CD4-positive, alpha-beta memory T cell (primary cell): ENCODE measurements at regions of chr5 and their contacts with region 1.

Region 1: GRCh38 chr5:157049605-157050004 is 9.3 kb downstream of the HAVCR1 start:
- DNase-seq: no peak
- H3K4me3 ChIP-seq: peak overlapping the region; percentile 18 to 22
- H3K4me3 Mint-ChIP-seq: peak overlapping the region; percentile 65 to 87 (median 82)
- H3K27ac ChIP-seq: no peak overlapping the region
- H3K27ac Mint-ChIP-seq: peak overlapping the region; percentile 68 to 95 (median 91)
- H3K4me1 ChIP-seq: peaks cover 17% of the 10 kb centered on the region
- H3K4me1 Mint-ChIP-seq: peaks cover 20 to 50% (median 33%) of the 10 kb centered on the region in 4 donors
- H3K27me3 ChIP-seq: no peaks in the 10 kb centered on the region
- H3K27me3 Mint-ChIP-seq: no peaks in the 10 kb centered on the region

Region 2: GRCh38 chr5:157108976-157109375 is 59.4 kb after region 1 on chr5 and contains the start of gene HAVCR2:
- CTCF ChIA-PET with region 1: no interaction called
- POLR2A ChIA-PET with region 1: no interaction called
- intact Hi-C with region 1: loop called (anchors 5 kb)
- DNase-seq: peak; percentile 47 to 63 (median 54)
- H3K4me3 ChIP-seq: peak within 1 kb of the TSS; percentile 7 to 25
- H3K4me3 Mint-ChIP-seq: peak within 1 kb of the TSS; percentile 72 to 90 (median 86)
- H3K27ac ChIP-seq: peak within 1 kb of the TSS; percentile 12
- H3K27ac Mint-ChIP-seq: peak within 1 kb of the TSS; percentile 75 to 96 (median 92)
- H3K4me1 ChIP-seq: peaks cover 27% of the 10 kb centered on the region
- H3K4me1 Mint-ChIP-seq: peaks cover 20 to 49% (median 31%) of the 10 kb centered on the region in 4 donors
- H3K27me3 ChIP-seq: no peaks in the 10 kb centered on the region
- H3K27me3 Mint-ChIP-seq: no peaks in the 10 kb centered on the region
- total RNA-seq, gene HAVCR2: 2.7 to 4.5 TPM

Region 3: DNA sequence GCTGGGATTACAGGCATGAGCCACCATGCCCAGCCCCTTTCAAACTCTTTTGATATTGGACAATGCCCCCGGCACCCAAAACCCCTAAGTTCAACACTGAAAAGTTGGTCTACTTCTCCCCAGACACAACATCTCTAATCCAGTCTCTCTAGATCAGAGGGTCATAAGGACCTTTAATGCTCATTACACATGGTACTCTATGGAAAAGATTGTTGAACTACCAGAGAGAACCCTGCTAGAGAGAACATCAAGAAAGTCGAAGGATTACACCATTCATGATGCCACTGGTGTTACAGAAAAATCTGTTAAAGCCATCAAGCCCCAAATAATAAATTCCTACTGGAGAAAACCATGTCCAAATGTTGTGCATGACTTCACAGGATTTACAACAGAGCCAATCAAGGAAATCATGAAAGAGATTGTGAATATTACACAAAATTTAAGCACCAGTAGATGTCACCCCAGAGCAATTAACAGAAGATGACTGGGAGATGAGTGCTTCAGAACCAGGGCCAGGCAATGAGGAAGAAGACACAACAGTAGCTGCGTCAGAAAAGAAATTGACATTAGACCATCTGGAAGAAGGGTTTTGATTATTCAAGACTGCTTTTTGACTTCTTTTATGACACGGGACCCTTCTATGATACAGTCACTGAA is 382.1 kb after region 1 on chr5:
- CTCF ChIA-PET with region 1: no interaction called
- POLR2A ChIA-PET with region 1: no interaction called
- intact Hi-C with region 1: no loop called
- DNase-seq: peak; percentile 49 to 63 (median 59)
- H3K4me3 ChIP-seq: no peak overlapping the region
- H3K4me3 Mint-ChIP-seq: peak overlapping the region in 4 of 8 donors; percentile 17 to 65 (median 42)
- H3K27ac ChIP-seq: no peak overlapping the region
- H3K27ac Mint-ChIP-seq: peak overlapping the region in 6 of 7 donors; percentile 3 to 83 (median 77)
- H3K4me1 ChIP-seq: peaks cover 4% of the 10 kb centered on the region
- H3K4me1 Mint-ChIP-seq: peaks cover 5 to 7% (median 5%) of the 10 kb centered on the region in 4 donors
- H3K27me3 ChIP-seq: no peaks in the 10 kb centered on the region
- H3K27me3 Mint-ChIP-seq: no peaks in the 10 kb centered on the region